Sigmoid colon (tissue), 7 donors: ENCODE measurements at regions of chr5 and their contacts with region 1.

Region 1: GRCh38 chr5:81301271-81302015 is at the start of gene ZCCHC9:
- DNase-seq: peak; percentile 97
- H3K4me3 ChIP-seq: peak within 1 kb of the TSS; percentile 60 to 89 (median 76)
- H3K27ac ChIP-seq: peak within 1 kb of the TSS; percentile 85 to 92 (median 90)
- H3K4me1 ChIP-seq: peaks cover 0 to 46% (median 31%) of the 10 kb centered on the region in 4 donors
- H3K27me3 ChIP-seq: no peaks in the 10 kb centered on the region
- CTCF ChIP-seq: no peak
- EP300 ChIP-seq: no peak
- POLR2A ChIP-seq: peak; percentile 71 to 83
- total RNA-seq, gene ZCCHC9: 20.2 to 44.9 (median 29.6) TPM

Region 2: DNA sequence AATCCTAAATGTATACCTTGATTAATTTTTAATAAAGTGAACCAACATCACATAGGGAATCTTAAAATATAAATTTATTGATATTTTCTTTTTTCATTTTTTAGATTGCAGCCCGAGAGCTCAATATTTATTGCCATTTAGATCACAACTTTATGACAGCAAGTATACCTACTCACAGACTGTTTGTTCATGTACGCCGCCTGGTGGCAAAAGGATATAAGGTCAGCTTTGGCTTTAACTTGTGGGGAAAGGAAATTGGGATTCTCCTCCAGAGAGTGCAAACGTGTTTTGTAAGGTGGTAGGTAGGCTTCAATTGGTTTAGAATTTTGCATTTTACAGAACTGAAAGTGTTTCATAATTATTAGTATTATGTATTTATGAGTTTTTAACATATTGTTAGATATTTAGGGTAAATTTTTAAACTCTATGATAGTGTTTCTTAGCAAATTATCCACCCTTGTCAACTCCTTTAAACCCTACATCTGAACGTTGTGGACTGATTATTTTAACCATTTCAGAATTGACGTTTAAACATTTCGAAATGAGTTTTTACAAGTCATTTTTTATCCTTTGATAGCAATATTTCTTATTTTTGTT is 629.2 kb before region 1 on chr5:
- intact Hi-C with region 1: loop called (anchors 10 kb)
- DNase-seq: peak; percentile 77
- H3K4me3 ChIP-seq: no peak overlapping the region
- H3K27ac ChIP-seq: no peak overlapping the region
- H3K4me1 ChIP-seq: no peaks in the 10 kb centered on the region
- H3K27me3 ChIP-seq: no peaks in the 10 kb centered on the region
- CTCF ChIP-seq: peak; percentile 42 to 76 (median 73)
- EP300 ChIP-seq: no peak
- POLR2A ChIP-seq: no peak

Region 3: DNA sequence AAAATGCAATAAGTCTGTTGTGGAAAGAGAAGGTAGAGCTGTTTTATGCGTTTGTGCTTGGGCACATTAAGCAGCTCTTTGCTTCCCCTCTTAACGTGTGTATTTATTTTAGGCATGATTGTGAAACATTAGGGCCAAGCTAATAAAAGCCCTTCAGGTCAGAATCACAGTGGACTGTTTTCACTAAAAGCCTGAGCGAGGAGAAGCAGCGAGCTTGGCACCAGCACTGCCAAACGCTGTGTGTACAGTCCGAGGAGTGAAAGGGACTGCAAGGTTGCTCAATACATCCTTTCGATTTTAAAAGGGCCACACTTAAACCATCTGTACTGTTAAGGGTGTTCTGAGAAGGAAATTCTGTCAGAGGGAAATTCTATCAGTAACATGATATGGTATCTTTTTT is 175.5 kb before region 1 on chr5:
- intact Hi-C with region 1: no loop called
- DNase-seq: peak; percentile 87
- H3K4me3 ChIP-seq: no peak overlapping the region
- H3K27ac ChIP-seq: peak overlapping the region in 3 of 4 donors; percentile 11 to 60 (median 29)
- H3K4me1 ChIP-seq: peaks cover 0 to 14% (median 3%) of the 10 kb centered on the region in 4 donors
- H3K27me3 ChIP-seq: no peaks in the 10 kb centered on the region
- CTCF ChIP-seq: no peak
- EP300 ChIP-seq: peak in 1 of 4 donors; percentile 6
- POLR2A ChIP-seq: no peak

Region 4: DNA sequence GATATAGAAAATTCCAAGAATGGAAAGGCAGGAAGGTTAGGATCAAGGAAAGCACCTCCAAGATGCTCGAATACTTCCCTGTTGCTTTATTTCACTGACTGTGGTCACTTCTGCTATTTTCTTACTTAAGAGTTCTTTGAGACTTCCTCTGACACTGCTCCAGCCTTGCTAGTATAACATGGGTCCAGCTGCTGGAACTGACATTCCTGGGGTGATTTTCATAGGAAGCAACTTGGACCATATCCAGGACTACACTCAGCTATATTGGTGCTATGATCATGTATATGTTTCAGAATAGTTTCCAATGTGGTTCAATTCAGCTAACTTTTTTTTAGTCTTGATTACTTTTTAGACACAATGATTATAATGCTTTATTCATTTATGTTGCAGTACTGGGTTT is 149.9 kb before region 1 on chr5:
- intact Hi-C with region 1: no loop called
- DNase-seq: no peak
- H3K4me3 ChIP-seq: no peak overlapping the region
- H3K27ac ChIP-seq: no peak overlapping the region
- H3K4me1 ChIP-seq: no peaks in the 10 kb centered on the region
- H3K27me3 ChIP-seq: no peaks in the 10 kb centered on the region
- CTCF ChIP-seq: no peak
- EP300 ChIP-seq: no peak
- POLR2A ChIP-seq: no peak

Region 5: DNA sequence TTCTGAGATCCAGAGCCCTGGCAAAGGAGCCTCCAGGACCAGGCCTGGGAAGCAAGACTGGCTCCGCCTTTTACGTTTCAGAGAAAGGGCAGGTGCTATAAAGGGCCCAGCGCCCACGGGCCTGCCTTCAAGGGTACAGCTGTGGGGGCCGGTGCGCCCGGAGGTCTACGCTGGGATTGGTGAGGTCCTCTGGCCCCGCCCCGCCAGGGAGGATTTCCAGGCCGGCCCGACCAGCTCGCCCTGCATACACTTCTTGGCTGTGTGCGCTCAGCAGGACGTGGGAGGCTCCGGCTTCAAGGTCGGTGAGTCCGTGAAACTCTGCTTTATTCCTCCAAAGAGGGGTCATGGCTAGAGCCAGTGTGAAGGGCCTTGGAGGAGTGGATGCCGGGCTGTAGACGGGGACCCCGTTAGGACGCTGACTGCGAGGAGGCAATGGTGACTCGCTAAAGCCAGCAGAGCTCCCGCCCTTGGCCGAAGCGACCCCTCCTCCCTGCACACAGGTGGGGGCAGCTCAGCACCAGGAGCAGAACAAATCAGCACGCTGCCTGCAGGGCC is 68.3 kb before region 1 on chr5 and contains the start of gene CKMT2:
- intact Hi-C with region 1: loop called (anchors 2 kb)
- DNase-seq: peak; percentile 86
- H3K4me3 ChIP-seq: peak within 1 kb of the TSS; percentile 15 to 47 (median 44)
- H3K27ac ChIP-seq: peak within 1 kb of the TSS; percentile 72 to 80 (median 78)
- H3K4me1 ChIP-seq: peaks cover 0 to 31% (median 22%) of the 10 kb centered on the region in 4 donors
- H3K27me3 ChIP-seq: no peaks in the 10 kb centered on the region
- CTCF ChIP-seq: no peak
- EP300 ChIP-seq: no peak
- POLR2A ChIP-seq: no peak
- total RNA-seq, gene CKMT2: 2.9 to 11.1 (median 7.2) TPM

Region 6: DNA sequence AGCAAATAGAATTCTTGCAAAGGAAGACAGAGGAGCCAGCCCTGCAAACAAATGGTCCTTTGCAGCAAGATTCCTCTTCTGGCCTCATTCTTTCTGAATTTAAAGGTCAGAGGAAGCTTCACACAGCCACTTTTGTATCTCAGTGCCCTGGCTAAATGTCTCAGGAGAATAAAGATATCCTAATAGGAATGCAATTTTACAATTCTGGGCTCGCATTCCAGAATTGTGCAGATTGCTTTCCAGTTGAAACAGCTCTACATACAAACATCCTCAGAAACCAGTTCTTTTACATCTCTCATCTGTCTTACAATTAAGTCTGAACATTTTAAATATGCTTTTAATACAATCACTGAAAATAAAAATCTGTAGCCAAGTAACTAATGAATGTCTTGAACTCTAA is 107.1 kb after region 1 on chr5:
- intact Hi-C with region 1: no loop called
- DNase-seq: no peak
- H3K4me3 ChIP-seq: no peak overlapping the region
- H3K27ac ChIP-seq: no peak overlapping the region
- H3K4me1 ChIP-seq: no peaks in the 10 kb centered on the region
- H3K27me3 ChIP-seq: no peaks in the 10 kb centered on the region
- CTCF ChIP-seq: no peak
- EP300 ChIP-seq: no peak
- POLR2A ChIP-seq: no peak

Region 7: DNA sequence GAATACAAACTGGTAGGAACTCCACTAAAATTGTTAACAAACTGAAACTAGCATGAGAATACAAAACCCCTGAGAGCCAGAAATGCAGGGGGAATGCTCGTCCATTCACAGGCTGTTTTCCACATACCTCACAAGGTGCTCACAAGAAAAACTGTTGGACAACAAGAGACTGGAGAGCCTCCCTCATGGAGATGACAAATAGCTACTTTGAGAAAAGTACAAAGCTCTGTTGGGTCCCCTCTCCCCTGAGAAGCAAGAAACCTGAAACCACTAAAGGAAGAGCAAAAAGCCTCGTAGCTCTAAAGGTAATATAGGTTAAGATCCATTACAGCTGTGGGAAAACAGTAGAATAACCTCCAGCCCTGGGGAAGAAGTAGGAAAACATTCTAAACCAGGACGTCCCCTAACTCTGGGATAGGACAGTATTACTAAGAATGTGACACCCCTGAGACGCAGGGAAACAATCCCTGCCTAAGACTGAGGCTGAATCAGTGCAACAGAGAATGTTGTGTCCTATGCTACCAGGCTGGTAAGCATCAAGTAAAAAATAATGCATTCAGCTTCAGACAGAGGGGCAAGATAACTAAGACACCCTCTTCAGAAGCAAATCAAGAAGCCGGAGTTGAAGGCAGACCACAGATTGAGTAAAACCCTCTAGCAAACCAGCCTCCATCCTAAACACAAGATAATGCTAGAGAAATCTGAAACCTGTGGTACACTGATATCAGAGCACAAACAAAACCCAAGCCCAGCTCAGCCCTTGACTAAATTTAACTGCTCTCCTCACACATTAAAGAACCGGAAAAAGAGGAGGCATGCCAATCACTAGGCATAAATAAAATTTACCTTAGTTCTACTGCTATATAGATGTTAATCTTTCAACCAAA is 289.3 kb after region 1 on chr5:
- intact Hi-C with region 1: no loop called
- DNase-seq: no peak
- H3K4me3 ChIP-seq: no peak overlapping the region
- H3K27ac ChIP-seq: no peak overlapping the region
- H3K4me1 ChIP-seq: peaks cover 0 to 4% (median 0%) of the 10 kb centered on the region in 4 donors
- H3K27me3 ChIP-seq: no peaks in the 10 kb centered on the region
- CTCF ChIP-seq: no peak
- EP300 ChIP-seq: no peak
- POLR2A ChIP-seq: no peak

Region 8: GRCh38 chr5:82225525-82226172 is 924.2 kb after region 1 on chr5:
- intact Hi-C with region 1: loop called (anchors 10 kb)
- DNase-seq: peak; percentile 69
- H3K4me3 ChIP-seq: no peak overlapping the region
- H3K27ac ChIP-seq: no peak overlapping the region
- H3K4me1 ChIP-seq: peaks cover 0 to 3% (median 0%) of the 10 kb centered on the region in 4 donors
- H3K27me3 ChIP-seq: no peaks in the 10 kb centered on the region
- CTCF ChIP-seq: peak; percentile 68 to 83 (median 74)
- EP300 ChIP-seq: no peak
- POLR2A ChIP-seq: no peak